ENCODE measurements at regions of chr2 and their contacts with region 1.

Region 1: DNA sequence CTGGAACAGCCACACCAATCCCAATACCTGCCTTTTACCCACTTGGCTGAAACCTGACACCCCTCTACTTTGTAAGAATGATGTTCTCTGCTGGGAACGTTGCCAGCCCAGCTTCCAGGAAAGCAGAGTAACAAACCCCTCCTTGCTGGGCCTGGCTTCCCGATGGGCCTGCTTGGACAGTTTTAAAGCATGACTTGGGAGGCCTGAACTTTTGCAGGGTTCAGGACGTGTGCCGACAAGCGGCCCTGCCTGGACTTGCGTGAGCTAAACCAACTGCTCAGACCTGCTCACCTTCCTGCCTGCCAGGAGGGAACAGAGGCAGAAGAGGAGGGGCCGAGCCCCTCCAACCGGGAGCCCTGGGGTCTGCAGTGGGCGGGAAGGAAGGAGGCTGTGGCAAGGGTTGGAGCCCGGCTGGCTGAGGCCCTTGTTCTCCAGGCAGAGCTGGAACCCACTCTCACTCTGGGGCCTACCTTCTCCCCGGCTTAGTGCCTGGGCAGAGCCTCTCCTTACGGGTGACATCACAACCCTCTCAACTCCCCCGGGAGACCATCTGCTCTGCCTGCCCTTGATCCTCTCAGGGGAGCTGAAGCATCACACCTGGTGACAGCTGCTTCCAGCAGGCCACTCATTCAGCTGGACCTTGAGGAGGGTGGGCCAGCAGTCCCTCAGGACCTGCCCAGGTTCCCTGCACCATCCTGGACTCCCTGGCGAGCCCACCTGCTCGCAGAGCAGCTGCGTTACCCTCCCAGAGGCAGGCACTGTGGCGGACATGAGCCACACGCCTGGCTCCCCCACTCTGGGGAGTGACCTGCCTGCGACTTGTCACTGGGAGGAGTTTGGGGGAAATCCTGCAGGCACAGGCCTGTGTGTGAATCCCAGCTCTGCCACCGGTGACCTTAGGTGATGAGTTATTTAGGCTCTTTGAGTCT is 13.2 kb downstream of the HS6ST1 start:
- DNase-seq: peak; percentile 81
- H3K4me3 ChIP-seq: no peak overlapping the region
- H3K27me3 ChIP-seq: no peaks in the 10 kb centered on the region
- CTCF ChIP-seq: peak; percentile 23; the same call in 1 of the 2 replicates

Region 2: GRCh38 chr2:128172191-128172590 is 133.2 kb before region 1 on chr2:
- CTCF ChIA-PET with region 1: interaction called, 10 read pairs
- POLR2A ChIA-PET with region 1: no interaction called
- DNase-seq: no peak
- H3K4me3 ChIP-seq: no peak overlapping the region
- H3K27me3 ChIP-seq: no peaks in the 10 kb centered on the region
- CTCF ChIP-seq: peak; percentile 48

Region 3: GRCh38 chr2:128178650-128179460 is 126.6 kb before region 1 on chr2:
- CTCF ChIA-PET with region 1: interaction called, 18 read pairs
- POLR2A ChIA-PET with region 1: no interaction called
- DNase-seq: no peak
- H3K4me3 ChIP-seq: no peak overlapping the region
- H3K27me3 ChIP-seq: no peaks in the 10 kb centered on the region
- CTCF ChIP-seq: peak; percentile 92